ENCODE measurements at regions of chr11 and their contacts with region 1.

Region 1: DNA sequence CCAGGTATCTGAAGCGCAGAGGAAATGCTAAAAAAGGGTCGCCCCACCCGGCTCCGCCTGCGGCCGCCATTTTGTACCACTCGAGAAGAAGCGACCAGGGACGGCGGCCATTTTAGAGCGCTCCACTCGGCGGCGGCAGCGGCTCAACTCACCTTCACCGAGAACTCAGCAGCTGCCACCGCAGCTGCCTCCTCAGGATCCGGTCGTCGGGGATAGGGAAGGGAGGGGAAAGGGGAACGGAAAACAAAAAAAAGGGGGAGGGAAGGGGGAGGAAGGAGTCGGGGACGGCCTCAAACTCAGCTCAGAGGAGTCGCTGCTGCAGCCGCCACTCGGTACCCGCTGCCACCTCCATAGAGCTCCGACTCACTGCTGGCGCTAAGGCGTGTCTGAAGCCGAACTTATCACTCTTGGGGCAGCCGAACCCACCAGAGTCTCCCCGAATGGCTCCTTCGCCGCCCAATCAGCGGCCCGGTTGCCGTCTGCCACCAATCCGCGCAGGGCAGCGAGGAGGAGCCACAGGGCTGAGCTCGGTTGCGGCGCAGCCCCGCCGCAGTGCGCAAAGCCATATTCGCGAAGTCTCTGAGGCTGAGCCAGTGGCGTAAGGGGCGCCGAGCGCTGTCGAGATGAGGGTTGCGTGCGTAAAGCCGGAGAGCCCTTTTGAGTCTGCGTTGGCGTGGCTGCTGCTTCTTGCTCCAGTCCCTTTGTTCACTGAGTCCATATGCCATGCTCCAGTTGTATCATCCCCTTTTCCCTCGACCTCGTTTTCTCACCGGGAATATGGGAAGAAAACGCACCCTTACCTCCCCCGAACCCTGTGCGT is at the start of gene EIF4G2:
- DNase-seq: peak; percentile 95 to 99 (median 98)
- ATAC-seq: peak; percentile 90
- H3K4me3 ChIP-seq: peak within 1 kb of the TSS; percentile 85 to 87
- H3K4me3 Mint-ChIP-seq: peak within 1 kb of the TSS; percentile 97
- H3K27ac ChIP-seq: peak within 1 kb of the TSS; percentile 92 to 96
- H3K27ac Mint-ChIP-seq: peak within 1 kb of the TSS; percentile 99
- H3K4me1 ChIP-seq: peaks cover 47% of the 10 kb centered on the region
- H3K4me1 Mint-ChIP-seq: peaks cover 45% of the 10 kb centered on the region
- H3K27me3 ChIP-seq: no peaks in the 10 kb centered on the region
- H3K27me3 Mint-ChIP-seq: no peaks in the 10 kb centered on the region
- CTCF ChIP-seq: no peak
- total RNA-seq, gene EIF4G2: 1,089 to 1,144 TPM

Region 2: DNA sequence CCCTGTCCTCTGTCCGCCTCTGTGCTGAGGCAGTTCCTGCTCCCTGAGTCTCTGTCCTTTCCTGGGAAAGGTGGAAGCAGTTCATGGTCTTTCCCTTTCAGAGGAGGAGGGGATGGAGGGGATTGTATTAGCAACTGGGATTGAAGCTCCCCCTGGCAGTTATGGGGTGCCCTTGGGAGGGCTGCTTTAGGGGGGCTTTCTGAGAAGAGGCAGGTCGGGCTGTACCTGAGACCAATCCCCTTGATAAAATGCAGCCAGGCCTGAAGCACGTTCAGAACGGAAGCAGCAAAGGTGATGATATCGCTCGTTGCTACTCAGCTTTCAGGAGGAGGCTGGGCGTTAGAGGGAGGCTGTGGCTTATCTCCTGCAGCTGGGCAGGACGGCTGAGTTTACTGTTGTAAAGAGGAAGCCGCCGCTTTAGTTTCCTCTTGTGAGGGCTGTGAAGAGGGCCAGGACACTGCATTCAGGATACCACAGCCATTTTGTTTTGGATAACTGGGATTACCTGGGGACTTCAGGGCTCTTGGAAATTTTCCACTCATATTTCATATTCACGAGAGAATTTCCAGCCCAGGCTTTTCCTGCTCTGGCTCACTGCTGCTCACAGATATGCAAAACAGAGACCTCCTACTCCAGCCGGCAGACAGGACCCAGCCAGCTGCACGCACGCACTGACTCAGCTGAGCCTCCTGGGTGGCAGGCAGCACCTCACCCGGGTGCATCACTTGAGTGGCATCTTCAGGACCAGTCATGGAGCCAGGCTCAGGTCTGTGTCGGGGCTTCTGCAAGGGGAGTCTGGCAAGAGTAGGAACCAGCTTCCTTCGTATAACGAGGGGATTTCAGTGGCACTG is 352.9 kb before region 1 on chr11:
- CTCF ChIA-PET with region 1: no interaction called
- POLR2A ChIA-PET with region 1: interaction called, 18 read pairs
- intact Hi-C with region 1: no loop called
- DNase-seq: peak; percentile 30 to 87 (median 74)
- ATAC-seq: peak; percentile 74
- H3K4me3 ChIP-seq: peak overlapping the region; percentile 52 to 54
- H3K4me3 Mint-ChIP-seq: peak overlapping the region; percentile 91
- H3K27ac ChIP-seq: peak overlapping the region; percentile 10 to 67
- H3K27ac Mint-ChIP-seq: peak overlapping the region; percentile 98
- H3K4me1 ChIP-seq: peaks cover 58% of the 10 kb centered on the region
- H3K4me1 Mint-ChIP-seq: peaks cover 81% of the 10 kb centered on the region
- H3K27me3 ChIP-seq: no peaks in the 10 kb centered on the region
- H3K27me3 Mint-ChIP-seq: no peaks in the 10 kb centered on the region
- CTCF ChIP-seq: no peak

Region 3: GRCh38 chr11:10792398-10792975 is 16.3 kb before region 1 on chr11:
- CTCF ChIA-PET with region 1: interaction called, 51 read pairs
- POLR2A ChIA-PET with region 1: interaction called, 67 read pairs
- intact Hi-C with region 1: no loop called
- DNase-seq: peak; percentile 65 to 91 (median 85)
- ATAC-seq: peak; percentile 88
- H3K4me3 ChIP-seq: no peak overlapping the region
- H3K4me3 Mint-ChIP-seq: no peak overlapping the region
- H3K27ac ChIP-seq: no peak overlapping the region
- H3K27ac Mint-ChIP-seq: no peak overlapping the region
- H3K4me1 ChIP-seq: peaks cover 24% of the 10 kb centered on the region
- H3K4me1 Mint-ChIP-seq: peaks cover 31% of the 10 kb centered on the region
- H3K27me3 ChIP-seq: peaks cover 0 to 5% of the 10 kb centered on the region in 2 experiments
- H3K27me3 Mint-ChIP-seq: peaks cover 3% of the 10 kb centered on the region
- CTCF ChIP-seq: peak; percentile 90

Region 4: DNA sequence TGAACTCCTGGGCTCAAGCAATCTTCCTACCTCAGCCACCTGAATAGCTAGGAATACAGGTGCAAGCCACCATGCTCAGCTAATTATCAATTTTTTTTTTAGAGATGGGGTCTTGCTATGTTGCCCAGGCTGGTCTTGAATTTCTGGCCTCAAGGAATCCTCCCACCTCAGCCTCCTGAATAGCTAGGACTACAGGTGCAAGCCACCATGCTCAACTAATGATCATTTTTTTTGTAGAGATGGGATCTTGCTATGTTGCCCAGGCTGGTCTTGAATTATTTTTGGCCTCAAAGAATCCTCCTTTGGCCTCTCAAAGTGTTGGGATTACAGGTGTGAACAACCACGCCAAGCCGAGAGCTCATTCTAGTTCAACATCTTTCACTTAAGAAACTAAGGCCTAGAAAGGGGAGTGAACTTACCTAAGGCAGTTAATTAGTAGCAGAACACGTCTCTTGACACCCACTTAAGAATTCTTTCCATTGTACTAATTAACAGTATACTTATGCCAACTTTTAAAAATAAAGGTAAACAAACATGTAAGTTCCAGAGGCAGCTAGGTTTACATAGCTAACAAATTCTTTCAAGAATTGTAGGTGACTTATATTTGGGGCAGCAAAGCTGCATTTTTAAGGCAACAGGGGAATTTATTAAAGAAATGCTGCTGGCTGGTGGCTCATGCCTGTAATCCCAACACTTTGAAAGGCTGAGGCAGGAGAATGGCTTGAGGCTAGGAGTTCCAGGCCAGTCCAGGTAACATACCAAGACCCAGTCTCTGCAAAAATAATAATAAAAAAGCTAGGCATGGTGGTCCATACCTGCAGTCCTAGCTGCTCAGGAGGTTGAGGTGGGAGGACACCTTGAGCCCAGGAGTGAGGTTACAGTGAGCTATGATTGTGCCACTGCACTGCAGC is 39.5 kb after region 1 on chr11:
- CTCF ChIA-PET with region 1: interaction called, 3 read pairs
- POLR2A ChIA-PET with region 1: interaction called, 47 read pairs
- intact Hi-C with region 1: no loop called
- DNase-seq: no peak
- ATAC-seq: no peak
- H3K4me3 ChIP-seq: no peak overlapping the region
- H3K4me3 Mint-ChIP-seq: no peak overlapping the region
- H3K27ac ChIP-seq: no peak overlapping the region
- H3K27ac Mint-ChIP-seq: peak overlapping the region; percentile 43
- H3K4me1 ChIP-seq: peaks cover 14% of the 10 kb centered on the region
- H3K4me1 Mint-ChIP-seq: peaks cover 30% of the 10 kb centered on the region
- H3K27me3 ChIP-seq: no peaks in the 10 kb centered on the region
- H3K27me3 Mint-ChIP-seq: no peaks in the 10 kb centered on the region
- CTCF ChIP-seq: no peak

Region 5: GRCh38 chr11:10933455-10934292 is 124.9 kb after region 1 on chr11:
- CTCF ChIA-PET with region 1: interaction called, 3 read pairs
- POLR2A ChIA-PET with region 1: interaction called, 10 read pairs
- intact Hi-C with region 1: loop called in 1 of 2 experiments (anchors 5 kb)
- DNase-seq: peak; percentile 66 to 87 (median 82)
- ATAC-seq: peak; percentile 88
- H3K4me3 ChIP-seq: peak overlapping the region; percentile 50 to 53
- H3K4me3 Mint-ChIP-seq: peak overlapping the region; percentile 83
- H3K27ac ChIP-seq: no peak overlapping the region
- H3K27ac Mint-ChIP-seq: no peak overlapping the region
- H3K4me1 ChIP-seq: no peaks in the 10 kb centered on the region
- H3K4me1 Mint-ChIP-seq: peaks cover 20% of the 10 kb centered on the region
- H3K27me3 ChIP-seq: peaks cover 7 to 19% of the 10 kb centered on the region in 2 experiments
- H3K27me3 Mint-ChIP-seq: peaks cover 18% of the 10 kb centered on the region
- CTCF ChIP-seq: peak; percentile 98

Region 6: DNA sequence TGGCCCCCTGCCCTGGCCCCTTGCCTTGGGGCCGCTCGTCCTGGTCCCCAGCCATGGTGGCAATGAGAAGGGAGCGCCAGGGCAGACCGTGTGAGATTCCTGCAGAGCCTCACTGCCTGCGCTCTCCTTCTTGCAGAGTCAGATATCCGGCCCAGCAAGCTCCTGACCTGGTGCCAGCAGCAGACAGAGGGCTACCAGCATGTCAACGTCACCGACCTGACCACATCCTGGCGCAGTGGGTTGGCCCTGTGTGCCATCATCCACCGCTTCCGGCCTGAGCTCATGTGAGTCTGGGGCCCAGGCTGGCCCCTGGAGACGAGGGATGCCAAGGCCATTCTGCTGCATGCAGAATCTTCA is 1415.8 kb after region 1 on chr11:
- CTCF ChIA-PET with region 1: no interaction called
- POLR2A ChIA-PET with region 1: interaction called, 3 read pairs
- intact Hi-C with region 1: loop called in 1 of 2 experiments (anchors 2 kb)
- DNase-seq: peak; percentile 76 to 96 (median 92)
- ATAC-seq: peak; percentile 89
- H3K4me3 ChIP-seq: peak overlapping the region; percentile 35 to 50
- H3K4me3 Mint-ChIP-seq: peak overlapping the region; percentile 65
- H3K27ac ChIP-seq: peak overlapping the region; percentile 47 to 91
- H3K27ac Mint-ChIP-seq: peak overlapping the region; percentile 91
- H3K4me1 ChIP-seq: peaks cover 45% of the 10 kb centered on the region
- H3K4me1 Mint-ChIP-seq: peaks cover 51% of the 10 kb centered on the region
- H3K27me3 ChIP-seq: no peaks in the 10 kb centered on the region
- H3K27me3 Mint-ChIP-seq: no peaks in the 10 kb centered on the region
- CTCF ChIP-seq: no peak

Measured in CD8-positive, alpha-beta T cell (primary cell).